SK-N-SH (cell line): ENCODE measurements at regions of chr9 and their contacts with region 1.

Region 1: DNA sequence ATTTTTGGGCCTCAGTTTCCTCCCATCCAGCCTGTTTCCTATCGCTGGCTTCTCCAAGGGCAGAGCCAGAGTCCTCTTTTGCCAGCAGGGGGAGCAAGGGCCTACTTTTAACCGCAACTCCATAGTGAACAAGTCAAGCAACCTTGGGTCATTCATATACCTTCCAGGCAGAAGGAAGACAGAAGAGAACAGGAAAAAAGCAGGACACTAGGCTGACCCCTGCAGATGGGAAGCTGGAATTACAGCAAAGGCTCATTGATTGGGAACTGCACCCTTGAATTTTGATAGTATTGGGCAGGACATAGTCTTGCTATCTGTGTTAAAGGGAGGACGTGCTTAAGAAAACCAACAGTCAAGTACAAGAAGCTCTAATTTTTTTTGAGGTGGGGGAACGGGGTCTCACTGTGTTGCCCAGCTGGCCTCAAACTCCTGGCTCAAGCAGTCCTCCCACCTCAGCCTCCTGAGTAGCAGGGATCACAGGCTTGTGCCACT is 30.1 kb downstream of the QRFP start:
- DNase-seq: peak; percentile 79
- H3K4me3 ChIP-seq: peak overlapping the region in 1 of 2 experiments; percentile 24; a peak in 1 of 4 replicates
- H3K27ac ChIP-seq: no peak overlapping the region; a peak in 1 of 4 replicates
- H3K4me1 ChIP-seq: peaks cover 0 to 13% of the 10 kb centered on the region in 2 experiments; a peak in 2 of 4 replicates
- H3K27me3 ChIP-seq: no peaks in the 10 kb centered on the region
- CTCF ChIP-seq: peak; percentile 99
- EP300 ChIP-seq: 0 out of 4 replicates have a peak, but pooled peaks of 1 of the 2 experiments have one; percentile 12
- RAD21 ChIP-seq: peak; percentile 77

Region 2: GRCh38 chr9:130701056-130702022 is 165.2 kb before region 1 on chr9:
- CTCF ChIA-PET with region 1: interaction called, 177 read pairs
- POLR2A ChIA-PET with region 1: no interaction called
- DNase-seq: peak; percentile 79
- H3K4me3 ChIP-seq: peak overlapping the region in 1 of 2 experiments; percentile 32; a peak in 1 of 4 replicates
- H3K27ac ChIP-seq: peak overlapping the region; percentile 11 to 42; a peak in 2 of 4 replicates
- H3K4me1 ChIP-seq: peaks cover 0 to 7% of the 10 kb centered on the region in 2 experiments; a peak in 2 of 4 replicates
- H3K27me3 ChIP-seq: no peaks in the 10 kb centered on the region
- CTCF ChIP-seq: peak; percentile 98
- EP300 ChIP-seq: no peak
- RAD21 ChIP-seq: peak; percentile 70

Region 3: GRCh38 chr9:130770679-130771442 is 95.7 kb before region 1 on chr9:
- CTCF ChIA-PET with region 1: interaction called, 115 read pairs
- POLR2A ChIA-PET with region 1: no interaction called
- DNase-seq: peak; percentile 71
- H3K4me3 ChIP-seq: no peak overlapping the region; a peak in 1 of 4 replicates
- H3K27ac ChIP-seq: no peak overlapping the region
- H3K4me1 ChIP-seq: peaks cover 6 to 21% of the 10 kb centered on the region in 2 experiments; a peak in 3 of 4 replicates
- H3K27me3 ChIP-seq: no peaks in the 10 kb centered on the region
- CTCF ChIP-seq: peak; percentile 80
- EP300 ChIP-seq: no peak
- RAD21 ChIP-seq: peak; percentile 87

Region 4: DNA sequence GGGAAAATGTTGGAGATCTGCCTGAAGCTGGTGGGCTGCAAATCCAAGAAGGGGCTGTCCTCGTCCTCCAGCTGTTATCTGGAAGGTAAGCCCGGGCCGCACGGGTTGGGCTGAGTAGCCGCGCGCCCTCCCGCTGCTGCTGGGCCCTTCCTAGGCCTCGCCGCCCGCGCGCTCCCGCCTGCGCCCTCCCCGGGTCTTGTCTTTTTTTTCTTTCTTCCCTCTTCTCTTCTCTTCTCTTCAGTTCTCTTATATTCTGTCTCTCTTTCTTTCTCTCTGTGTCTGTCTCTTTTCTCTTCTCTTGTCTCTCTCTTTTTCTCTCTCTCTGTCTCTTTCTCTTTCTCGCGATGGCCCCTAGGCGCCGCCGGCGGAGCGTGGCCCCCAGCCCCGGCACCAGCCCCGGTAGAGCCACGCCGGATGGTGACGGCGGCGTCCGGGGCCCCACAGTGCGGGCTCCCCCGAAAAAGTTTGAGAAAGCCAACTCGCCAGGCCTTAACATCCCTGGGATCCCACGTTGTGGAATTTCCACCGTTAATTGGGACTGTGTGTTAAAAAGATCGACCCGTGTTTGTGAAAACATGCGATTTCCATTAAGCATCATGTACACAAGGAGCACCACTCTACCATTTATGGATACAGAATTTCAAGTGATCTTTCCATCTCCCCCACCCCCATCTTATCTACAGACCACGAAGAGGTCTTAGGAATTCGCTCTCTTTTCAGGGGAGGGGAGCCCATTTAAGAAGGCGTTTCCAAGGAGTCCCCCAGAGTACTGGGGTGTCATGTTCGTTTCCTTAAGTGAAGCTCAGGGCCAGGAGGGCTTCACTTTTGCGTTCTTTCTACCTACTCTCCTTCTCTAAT is 30.9 kb before region 1 on chr9:
- CTCF ChIA-PET with region 1: interaction called, 60 read pairs
- POLR2A ChIA-PET with region 1: no interaction called
- DNase-seq: peak; percentile 78
- H3K4me3 ChIP-seq: peak overlapping the region; percentile 73 to 77
- H3K27ac ChIP-seq: peak overlapping the region; percentile 85 to 97
- H3K4me1 ChIP-seq: peaks cover 42 to 44% of the 10 kb centered on the region in 2 experiments
- H3K27me3 ChIP-seq: no peaks in the 10 kb centered on the region
- CTCF ChIP-seq: peak; percentile 21; the same call in 1 of the 2 replicates
- EP300 ChIP-seq: no peak
- RAD21 ChIP-seq: no peak

Region 5: DNA sequence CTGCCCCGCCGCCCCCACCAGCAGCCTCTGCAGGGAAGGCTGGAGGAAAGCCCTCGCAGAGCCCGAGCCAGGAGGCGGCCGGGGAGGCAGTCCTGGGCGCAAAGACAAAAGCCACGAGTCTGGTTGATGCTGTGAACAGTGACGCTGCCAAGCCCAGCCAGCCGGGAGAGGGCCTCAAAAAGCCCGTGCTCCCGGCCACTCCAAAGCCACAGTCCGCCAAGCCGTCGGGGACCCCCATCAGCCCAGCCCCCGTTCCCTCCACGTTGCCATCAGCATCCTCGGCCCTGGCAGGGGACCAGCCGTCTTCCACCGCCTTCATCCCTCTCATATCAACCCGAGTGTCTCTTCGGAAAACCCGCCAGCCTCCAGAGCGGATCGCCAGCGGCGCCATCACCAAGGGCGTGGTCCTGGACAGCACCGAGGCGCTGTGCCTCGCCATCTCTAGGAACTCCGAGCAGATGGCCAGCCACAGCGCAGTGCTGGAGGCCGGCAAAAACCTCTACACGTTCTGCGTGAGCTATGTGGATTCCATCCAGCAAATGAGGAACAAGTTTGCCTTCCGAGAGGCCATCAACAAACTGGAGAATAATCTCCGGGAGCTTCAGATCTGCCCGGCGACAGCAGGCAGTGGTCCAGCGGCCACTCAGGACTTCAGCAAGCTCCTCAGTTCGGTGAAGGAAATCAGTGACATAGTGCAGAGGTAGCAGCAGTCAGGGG is 18.6 kb after region 1 on chr9:
- CTCF ChIA-PET with region 1: interaction called, 17 read pairs
- POLR2A ChIA-PET with region 1: no interaction called
- DNase-seq: no peak
- H3K4me3 ChIP-seq: no peak overlapping the region
- H3K27ac ChIP-seq: no peak overlapping the region; a peak in 1 of 4 replicates
- H3K4me1 ChIP-seq: no peaks in the 10 kb centered on the region; a peak in 1 of 4 replicates
- H3K27me3 ChIP-seq: no peaks in the 10 kb centered on the region
- CTCF ChIP-seq: no peak
- EP300 ChIP-seq: no peak
- RAD21 ChIP-seq: no peak

Region 6: DNA sequence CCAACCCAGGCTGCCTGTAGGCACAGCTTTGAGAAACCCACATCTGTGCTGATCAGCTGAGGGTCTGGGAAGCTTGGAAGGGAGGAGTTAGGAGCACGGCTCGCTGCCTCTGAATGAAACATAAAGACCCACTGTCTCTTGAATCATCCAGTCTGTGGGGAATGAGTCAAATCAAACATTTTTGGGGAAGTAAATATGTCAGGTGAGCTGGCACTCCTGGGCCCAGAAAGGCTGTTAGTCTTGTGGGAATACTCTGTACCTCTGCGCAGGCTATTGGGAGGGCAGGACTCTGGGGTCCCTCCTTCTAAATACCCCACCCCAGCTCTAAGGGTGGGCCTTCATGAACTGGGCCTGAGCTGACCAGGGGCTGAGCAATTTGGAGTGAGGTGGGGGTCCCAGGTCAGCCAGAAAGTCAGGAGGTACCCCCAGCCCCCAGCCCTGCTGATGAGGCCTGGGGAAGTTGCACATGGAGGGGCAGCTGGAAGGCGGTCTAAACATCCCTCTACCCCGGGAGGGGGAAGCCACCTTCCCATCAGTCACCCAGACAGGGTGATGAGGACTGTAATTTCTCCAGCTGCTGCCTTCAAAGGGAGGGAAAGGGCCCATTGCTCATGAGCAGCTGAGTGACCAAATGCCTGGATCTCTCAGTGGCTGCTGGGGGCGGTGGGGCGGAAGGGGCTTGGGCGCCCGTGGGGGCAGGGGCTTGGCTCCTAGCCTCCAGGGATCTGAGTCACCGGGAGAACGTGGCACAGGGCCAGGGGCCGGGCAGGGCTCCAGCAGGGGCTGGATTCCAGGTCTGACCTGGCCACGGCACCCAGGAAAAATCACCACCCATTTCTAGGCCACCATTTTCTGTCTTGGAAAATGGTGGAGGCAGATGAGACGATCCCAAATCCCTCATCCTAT is 61.7 kb after region 1 on chr9:
- CTCF ChIA-PET with region 1: interaction called, 21 read pairs
- POLR2A ChIA-PET with region 1: no interaction called
- DNase-seq: peak; percentile 77
- H3K4me3 ChIP-seq: no peak overlapping the region
- H3K27ac ChIP-seq: peak overlapping the region in 1 of 2 experiments; percentile 71; a peak in 2 of 4 replicates
- H3K4me1 ChIP-seq: peaks cover 11 to 18% of the 10 kb centered on the region in 2 experiments; a peak in 3 of 4 replicates
- H3K27me3 ChIP-seq: no peaks in the 10 kb centered on the region
- CTCF ChIP-seq: no peak
- EP300 ChIP-seq: peak in 1 of 2 experiments; percentile 25; a peak in 1 of 4 replicates
- RAD21 ChIP-seq: no peak

Region 7: DNA sequence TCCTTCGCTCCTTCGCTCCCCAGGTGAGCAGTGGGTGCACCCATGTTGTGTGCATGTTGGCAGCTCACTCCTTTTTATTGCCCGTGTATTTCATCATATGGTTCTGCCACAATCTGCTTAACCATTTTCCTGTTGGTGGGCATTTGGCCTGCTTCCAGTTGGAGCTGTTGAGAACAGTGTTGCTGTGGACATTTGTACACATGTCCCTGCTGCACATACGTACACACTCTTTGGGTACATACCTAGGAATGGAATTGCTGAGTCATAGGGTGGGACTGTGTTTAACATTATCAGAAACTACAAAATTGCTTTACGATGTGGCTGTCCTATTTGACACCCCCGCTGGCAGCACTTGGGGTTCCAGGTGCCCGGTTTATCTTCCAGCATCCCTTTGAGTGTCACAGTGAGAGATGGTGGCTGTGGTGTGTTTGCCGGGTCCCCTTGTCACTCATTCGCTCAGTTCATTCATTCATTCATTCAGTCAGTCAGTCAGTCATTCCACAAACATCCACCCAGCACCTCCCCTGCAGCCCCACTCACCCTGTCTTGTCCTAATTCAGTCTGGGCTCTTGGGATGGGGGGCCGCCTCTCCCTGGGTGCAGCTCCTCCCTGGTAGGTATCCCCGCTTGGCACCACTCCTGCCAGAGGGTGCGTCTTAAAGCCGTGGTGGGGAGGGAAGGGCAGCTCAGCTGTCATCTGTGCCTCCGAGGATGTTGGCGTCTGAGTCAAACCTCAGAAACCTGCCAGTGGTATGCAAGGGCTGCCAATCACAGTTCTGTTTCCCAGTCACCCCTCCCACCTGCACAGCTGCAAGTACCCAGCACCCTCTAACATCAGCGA is 80.5 kb after region 1 on chr9:
- CTCF ChIA-PET with region 1: interaction called, 17 read pairs
- POLR2A ChIA-PET with region 1: no interaction called
- DNase-seq: no peak
- H3K4me3 ChIP-seq: no peak overlapping the region
- H3K27ac ChIP-seq: no peak overlapping the region
- H3K4me1 ChIP-seq: no peaks in the 10 kb centered on the region
- H3K27me3 ChIP-seq: peaks cover 25% of the 10 kb centered on the region; the same call in 1 of the 2 replicates
- CTCF ChIP-seq: no peak
- EP300 ChIP-seq: no peak
- RAD21 ChIP-seq: no peak